WTC11 (cell line): ENCODE measurements at regions of chr16 and their contacts with region 1.

Region 1: GRCh38 chr16:25224731-25225319 is 8.1 kb downstream of the AQP8 start:
- DNase-seq: no peak
- ATAC-seq: no peak
- H3K4me3 Mint-ChIP-seq: no peak overlapping the region
- H3K27ac Mint-ChIP-seq: no peak overlapping the region
- H3K4me1 Mint-ChIP-seq: peaks cover 5% of the 10 kb centered on the region
- H3K27me3 Mint-ChIP-seq: no peaks in the 10 kb centered on the region
- CTCF ChIP-seq: no peak

Region 2: DNA sequence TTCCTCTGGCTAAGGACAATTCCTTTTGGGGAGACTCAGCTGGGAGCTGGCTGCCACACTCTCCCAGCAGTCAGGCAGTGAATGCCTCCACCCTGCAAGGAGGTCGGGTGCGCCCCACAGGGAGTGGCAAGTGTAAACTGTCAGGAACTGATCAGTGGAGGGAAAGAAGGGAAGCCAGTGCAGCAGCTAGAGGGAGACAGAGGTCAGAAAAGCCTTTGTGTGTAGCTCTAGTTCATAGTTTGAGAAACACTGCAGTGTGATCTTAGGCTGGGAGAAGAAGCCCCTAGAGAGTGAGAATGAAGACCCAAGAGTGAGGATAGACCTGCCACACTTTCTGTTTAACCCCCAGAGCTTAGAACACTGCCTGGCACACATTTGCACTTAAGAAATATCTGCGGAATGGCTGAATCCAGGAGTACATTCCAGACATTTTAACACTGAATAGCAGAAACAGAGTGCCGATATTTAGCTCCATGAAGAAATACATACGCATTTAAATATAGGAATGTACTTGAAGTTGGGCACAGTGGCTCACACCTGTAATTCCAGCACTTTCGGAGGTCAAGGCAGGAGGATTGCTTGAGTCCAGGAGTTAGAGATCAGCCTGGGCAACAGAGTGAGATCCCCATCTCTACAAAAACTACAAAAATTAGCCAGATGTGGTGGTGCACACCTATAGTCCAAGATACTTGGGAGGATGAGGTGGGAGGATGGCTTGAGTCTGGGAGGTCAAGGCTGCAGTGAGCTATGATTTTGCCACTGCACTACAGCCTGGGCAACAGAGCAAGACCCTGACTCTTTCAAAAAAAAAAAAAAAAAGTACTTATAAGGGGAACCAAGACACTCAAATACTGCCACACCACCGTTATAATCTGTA is 390.1 kb before region 1 on chr16:
- CTCF ChIA-PET with region 1: interaction called, 10 read pairs
- POLR2A ChIA-PET with region 1: no interaction called
- DNase-seq: peak; percentile 52
- ATAC-seq: peak; percentile 88
- H3K4me3 Mint-ChIP-seq: no peak overlapping the region
- H3K27ac Mint-ChIP-seq: no peak overlapping the region
- H3K4me1 Mint-ChIP-seq: no peaks in the 10 kb centered on the region
- H3K27me3 Mint-ChIP-seq: no peaks in the 10 kb centered on the region
- CTCF ChIP-seq: no peak

Region 3: GRCh38 chr16:25066747-25067631 is 157.8 kb before region 1 on chr16:
- CTCF ChIA-PET with region 1: interaction called, 20 read pairs
- POLR2A ChIA-PET with region 1: no interaction called
- DNase-seq: peak; percentile 87
- ATAC-seq: peak; percentile 97
- H3K4me3 Mint-ChIP-seq: peak overlapping the region; percentile 85
- H3K27ac Mint-ChIP-seq: no peak overlapping the region
- H3K4me1 Mint-ChIP-seq: peaks cover 15% of the 10 kb centered on the region
- H3K27me3 Mint-ChIP-seq: peaks cover 32% of the 10 kb centered on the region
- CTCF ChIP-seq: no peak

Region 4: GRCh38 chr16:25111403-25112166 is 113.2 kb before region 1 on chr16 and contains the start of gene LCMT1:
- CTCF ChIA-PET with region 1: interaction called, 21 read pairs
- POLR2A ChIA-PET with region 1: no interaction called
- DNase-seq: peak; percentile 91
- ATAC-seq: peak; percentile 88
- H3K4me3 Mint-ChIP-seq: peak within 1 kb of the TSS; percentile 93
- H3K27ac Mint-ChIP-seq: peak within 1 kb of the TSS; percentile 99
- H3K4me1 Mint-ChIP-seq: peaks cover 23% of the 10 kb centered on the region
- H3K27me3 Mint-ChIP-seq: no peaks in the 10 kb centered on the region; the same call in 1 of the 2 replicates
- CTCF ChIP-seq: no peak
- total RNA-seq, gene LCMT1: 86.3 to 89.6 TPM (median 86.7 TPM) in 3 replicates

Region 5: DNA sequence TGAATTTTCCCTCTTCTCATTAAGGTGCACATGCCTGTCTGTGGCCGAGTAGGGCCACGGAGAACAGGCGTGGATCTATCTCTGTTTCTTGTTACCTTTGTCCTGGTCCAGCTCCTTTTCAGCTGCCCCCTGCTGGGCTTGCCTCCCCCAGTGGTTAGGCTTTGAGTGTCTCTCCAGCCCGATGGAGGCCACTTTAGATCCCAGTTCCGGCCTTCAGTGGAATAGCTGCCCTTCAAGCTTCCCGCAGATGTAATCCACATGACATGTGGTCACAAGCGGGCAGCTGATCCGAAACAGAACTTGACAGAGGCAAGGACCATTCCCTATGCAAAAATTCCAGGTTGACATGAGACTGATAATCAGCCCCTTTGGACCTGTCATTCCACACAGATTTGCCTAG is 48.7 kb before region 1 on chr16:
- CTCF ChIA-PET with region 1: interaction called, 17 read pairs
- POLR2A ChIA-PET with region 1: no interaction called
- DNase-seq: no peak
- ATAC-seq: no peak
- H3K4me3 Mint-ChIP-seq: no peak overlapping the region
- H3K27ac Mint-ChIP-seq: no peak overlapping the region; the same call in 1 of the 2 replicates
- H3K4me1 Mint-ChIP-seq: no peaks in the 10 kb centered on the region
- H3K27me3 Mint-ChIP-seq: no peaks in the 10 kb centered on the region
- CTCF ChIP-seq: no peak

Region 6: GRCh38 chr16:25235991-25236390 is 11.2 kb after region 1 on chr16:
- CTCF ChIA-PET with region 1: interaction called, 31 read pairs
- POLR2A ChIA-PET with region 1: no interaction called
- DNase-seq: no peak
- ATAC-seq: no peak
- H3K4me3 Mint-ChIP-seq: no peak overlapping the region
- H3K27ac Mint-ChIP-seq: no peak overlapping the region
- H3K4me1 Mint-ChIP-seq: 0 out of 2 replicates have a peak, but pooled peaks cover 2% of the 10 kb centered on the region
- H3K27me3 Mint-ChIP-seq: no peaks in the 10 kb centered on the region
- CTCF ChIP-seq: no peak

Region 7: DNA sequence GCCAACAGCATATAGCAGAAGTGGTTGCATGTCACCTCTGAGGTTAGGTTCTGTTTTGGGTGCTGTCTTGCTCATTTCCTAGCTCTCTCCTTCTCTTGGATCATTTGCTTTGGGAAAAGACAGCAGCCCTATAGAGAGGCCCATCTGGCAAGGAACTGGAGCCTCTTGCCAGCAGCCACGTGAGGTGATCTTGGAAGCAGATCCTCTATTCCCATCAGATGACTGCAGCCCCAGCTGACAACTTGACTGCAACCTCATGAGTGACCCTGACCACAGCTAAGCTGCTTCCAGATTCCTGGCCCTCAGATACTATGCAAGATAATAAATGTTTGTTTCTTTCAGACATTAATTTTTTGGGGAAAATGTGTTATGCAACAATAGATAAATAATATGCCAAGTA is 253.7 kb after region 1 on chr16:
- CTCF ChIA-PET with region 1: no interaction called
- POLR2A ChIA-PET with region 1: no interaction called
- DNase-seq: no peak
- ATAC-seq: no peak
- H3K4me3 Mint-ChIP-seq: no peak overlapping the region
- H3K27ac Mint-ChIP-seq: no peak overlapping the region
- H3K4me1 Mint-ChIP-seq: peaks cover 6% of the 10 kb centered on the region
- H3K27me3 Mint-ChIP-seq: no peaks in the 10 kb centered on the region; the same call in 1 of the 2 replicates
- CTCF ChIP-seq: no peak